CD4-positive, alpha-beta memory T cell (primary cell): ENCODE measurements at regions of chr4 and their contacts with region 1.

Region 1: DNA sequence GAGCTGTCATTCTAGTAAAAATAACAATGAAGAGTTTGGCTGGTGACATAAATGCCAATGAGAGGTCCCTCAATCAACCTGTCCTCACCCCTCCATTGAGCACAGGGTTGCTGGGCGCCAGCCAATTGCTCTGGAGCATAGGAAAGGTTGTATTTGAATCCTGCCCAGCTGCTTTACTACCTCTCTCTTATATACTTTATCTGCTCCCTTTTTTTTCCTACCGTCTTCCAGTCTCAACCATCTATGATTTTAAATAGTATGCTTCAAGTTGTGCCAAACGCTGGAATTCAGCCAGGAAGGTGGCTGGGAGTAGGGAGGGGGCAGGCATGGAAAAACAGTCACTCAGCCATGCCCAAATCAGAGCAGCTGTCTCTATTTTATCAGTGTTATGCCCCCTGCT is 153.8 kb downstream of the NR3C2 start:
- DNase-seq: no peak
- H3K4me3 ChIP-seq: no peak overlapping the region
- H3K4me3 Mint-ChIP-seq: no peak overlapping the region
- H3K27ac ChIP-seq: no peak overlapping the region
- H3K27ac Mint-ChIP-seq: no peak overlapping the region
- H3K4me1 ChIP-seq: no peaks in the 10 kb centered on the region
- H3K4me1 Mint-ChIP-seq: peaks cover 24 to 46% (median 33%) of the 10 kb centered on the region in 4 donors
- H3K27me3 ChIP-seq: no peaks in the 10 kb centered on the region
- H3K27me3 Mint-ChIP-seq: no peaks in the 10 kb centered on the region

Region 2: GRCh38 chr4:148330161-148330560 is 41.7 kb after region 1 on chr4:
- CTCF ChIA-PET with region 1: no interaction called
- POLR2A ChIA-PET with region 1: no interaction called
- intact Hi-C with region 1: loop called (anchors 10 kb)
- DNase-seq: no peak
- H3K4me3 ChIP-seq: no peak overlapping the region
- H3K4me3 Mint-ChIP-seq: no peak overlapping the region
- H3K27ac ChIP-seq: no peak overlapping the region
- H3K27ac Mint-ChIP-seq: no peak overlapping the region
- H3K4me1 ChIP-seq: no peaks in the 10 kb centered on the region
- H3K4me1 Mint-ChIP-seq: peaks cover 24 to 47% (median 28%) of the 10 kb centered on the region in 4 donors
- H3K27me3 ChIP-seq: no peaks in the 10 kb centered on the region
- H3K27me3 Mint-ChIP-seq: no peaks in the 10 kb centered on the region